A673 (cell line): ENCODE measurements at regions of chr15 and their contacts with region 1.

Region 1: GRCh38 chr15:39756806-39757522 is 25.7 kb downstream of the FSIP1 start:
- DNase-seq: peak; percentile 72
- H3K4me3 ChIP-seq: no peak overlapping the region
- H3K27ac ChIP-seq: no peak overlapping the region
- H3K4me1 ChIP-seq: no peaks in the 10 kb centered on the region
- H3K27me3 ChIP-seq: peaks cover 5% of the 10 kb centered on the region
- CTCF ChIP-seq: peak; percentile 87

Region 2: DNA sequence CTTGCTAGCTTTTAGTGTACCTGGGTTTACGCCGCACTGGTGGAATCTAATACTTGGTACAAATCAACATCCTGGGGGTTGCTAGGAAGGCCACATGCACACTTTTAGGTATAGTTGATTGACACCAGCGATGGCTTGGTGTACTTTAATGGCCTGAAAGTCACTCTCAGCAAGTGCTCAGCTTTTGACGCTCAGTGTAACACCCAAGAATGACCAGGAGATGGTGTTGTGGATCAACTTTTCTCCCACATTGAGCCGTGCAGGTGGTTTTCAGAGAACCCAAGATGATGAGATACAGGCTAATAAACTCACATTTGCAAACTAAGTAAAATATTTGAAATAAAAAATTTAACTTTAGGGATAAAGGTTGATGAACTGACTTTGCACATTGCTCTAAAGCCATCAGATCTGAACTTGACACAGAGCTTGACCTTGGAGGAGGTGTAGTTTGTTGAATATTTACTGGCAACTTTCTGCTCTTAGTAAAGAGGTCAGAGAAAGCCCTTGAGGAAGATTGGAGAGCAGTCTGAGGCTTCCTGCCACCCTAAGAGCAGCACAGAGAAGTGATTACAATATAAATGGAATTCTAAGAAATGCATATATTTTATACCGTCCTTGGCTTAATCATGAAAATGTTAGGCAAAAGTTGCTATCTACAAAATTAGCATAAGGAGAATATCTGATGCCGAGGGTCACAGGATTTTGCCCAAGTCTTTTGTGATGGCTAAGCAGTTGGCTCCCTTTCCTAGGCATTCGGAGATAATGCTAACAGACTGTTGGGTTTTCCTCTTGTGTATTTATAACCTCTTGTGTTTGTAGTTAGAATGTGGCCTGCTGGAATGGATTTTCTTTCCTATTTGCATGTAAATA is 1048.9 kb before region 1 on chr15:
- CTCF ChIA-PET with region 1: no interaction called
- POLR2A ChIA-PET with region 1: no interaction called
- intact Hi-C with region 1: loop called (anchors 5 kb)
- DNase-seq: peak; percentile 50
- H3K4me3 ChIP-seq: no peak overlapping the region
- H3K27ac ChIP-seq: no peak overlapping the region
- H3K4me1 ChIP-seq: no peaks in the 10 kb centered on the region
- H3K27me3 ChIP-seq: peaks cover 15% of the 10 kb centered on the region
- CTCF ChIP-seq: peak; percentile 70

Region 3: GRCh38 chr15:38817427-38818156 is 939.4 kb before region 1 on chr15:
- CTCF ChIA-PET with region 1: no interaction called
- POLR2A ChIA-PET with region 1: no interaction called
- intact Hi-C with region 1: loop called (anchors 10 kb)
- DNase-seq: peak; percentile 49
- H3K4me3 ChIP-seq: no peak overlapping the region
- H3K27ac ChIP-seq: no peak overlapping the region
- H3K4me1 ChIP-seq: no peaks in the 10 kb centered on the region
- H3K27me3 ChIP-seq: peaks cover 10% of the 10 kb centered on the region
- CTCF ChIP-seq: peak; percentile 99

Region 4: GRCh38 chr15:39171944-39172368 is 585.0 kb before region 1 on chr15:
- CTCF ChIA-PET with region 1: interaction called, 4 read pairs
- POLR2A ChIA-PET with region 1: no interaction called
- intact Hi-C with region 1: loop called (anchors 2 kb)
- DNase-seq: peak; percentile 82
- H3K4me3 ChIP-seq: no peak overlapping the region
- H3K27ac ChIP-seq: no peak overlapping the region
- H3K4me1 ChIP-seq: no peaks in the 10 kb centered on the region
- H3K27me3 ChIP-seq: peaks cover 35% of the 10 kb centered on the region
- CTCF ChIP-seq: peak; percentile 41; the same call in 1 of the 2 replicates

Region 5: DNA sequence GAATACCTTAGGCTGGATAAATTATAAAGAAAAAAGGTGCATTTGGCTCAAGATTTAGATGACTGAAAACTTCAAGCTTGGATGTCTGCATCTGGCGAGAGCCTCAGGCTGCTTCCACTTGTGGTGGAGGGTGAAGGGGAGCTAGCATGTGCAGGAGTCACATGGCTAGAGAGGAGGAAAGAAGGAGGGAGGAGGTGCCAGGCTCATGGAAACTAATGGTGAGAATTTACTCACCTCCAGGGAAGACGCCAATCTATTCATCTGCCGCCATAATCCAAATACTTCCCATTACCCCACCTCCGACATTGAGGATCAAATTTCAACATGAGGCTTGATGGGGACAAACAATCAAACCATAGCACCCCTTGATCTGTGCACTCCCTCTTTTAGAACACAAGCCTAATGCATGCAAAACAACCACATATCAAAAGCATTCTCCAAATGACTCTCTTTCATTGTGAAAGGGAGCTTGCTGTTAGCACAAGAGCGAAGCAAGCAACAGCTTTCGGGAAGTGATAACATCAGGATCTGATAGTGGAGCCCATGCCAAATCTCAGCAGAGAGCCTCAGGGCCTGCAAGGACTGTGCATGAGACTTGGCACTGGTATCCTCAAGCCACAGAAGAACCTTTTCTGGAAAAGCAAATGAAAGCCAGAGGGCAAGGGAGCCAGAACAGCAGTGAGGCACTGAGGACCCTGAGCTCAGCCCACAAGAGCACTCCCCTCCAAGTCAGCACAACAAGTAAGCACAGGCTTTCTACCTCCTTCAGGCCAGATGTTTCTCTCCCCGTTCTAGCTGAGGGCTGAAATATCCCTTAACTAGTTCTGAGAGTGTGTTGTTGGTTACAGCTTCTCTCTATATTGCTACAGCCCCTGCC is 226.3 kb before region 1 on chr15:
- CTCF ChIA-PET with region 1: no interaction called
- POLR2A ChIA-PET with region 1: no interaction called
- intact Hi-C with region 1: no loop called
- DNase-seq: no peak
- H3K4me3 ChIP-seq: no peak overlapping the region
- H3K27ac ChIP-seq: no peak overlapping the region
- H3K4me1 ChIP-seq: no peaks in the 10 kb centered on the region
- H3K27me3 ChIP-seq: peaks cover 13% of the 10 kb centered on the region
- CTCF ChIP-seq: no peak

Region 6: DNA sequence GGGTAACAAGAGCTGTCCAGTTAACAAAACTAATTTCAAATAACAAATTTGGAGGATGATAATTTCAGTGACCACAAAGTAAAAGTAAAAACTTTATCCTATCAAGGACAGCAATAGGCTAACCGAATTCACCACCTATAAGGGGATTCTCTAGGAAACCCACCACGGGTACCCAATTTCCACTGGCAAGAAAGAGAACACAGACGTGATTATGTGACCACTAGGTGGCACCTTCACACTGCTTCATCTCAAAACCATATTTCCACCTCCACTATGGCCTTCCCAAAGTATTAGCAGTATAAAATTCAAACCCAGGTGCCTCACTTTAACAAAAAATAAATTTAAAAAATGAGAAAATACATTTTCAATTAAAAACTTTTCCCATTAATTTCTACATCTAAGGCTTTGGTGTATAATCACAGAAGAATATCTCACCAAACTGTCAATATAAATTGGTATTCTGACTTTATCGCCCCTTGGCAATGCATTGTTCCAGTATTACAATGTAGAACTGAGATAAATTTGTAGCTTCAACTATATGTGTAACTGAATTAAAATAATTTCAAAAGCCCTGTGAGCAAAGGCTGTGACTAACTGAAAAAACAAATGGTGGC is 70.9 kb before region 1 on chr15:
- CTCF ChIA-PET with region 1: interaction called, 33 read pairs
- POLR2A ChIA-PET with region 1: no interaction called
- intact Hi-C with region 1: loop called (anchors 1 kb)
- DNase-seq: peak; percentile 60
- H3K4me3 ChIP-seq: no peak overlapping the region
- H3K27ac ChIP-seq: no peak overlapping the region
- H3K4me1 ChIP-seq: no peaks in the 10 kb centered on the region
- H3K27me3 ChIP-seq: no peaks in the 10 kb centered on the region
- CTCF ChIP-seq: peak; percentile 84